Heart left ventricle (tissue), 16 donors: ENCODE measurements at regions of chr3 and their contacts with region 1.

Region 1: GRCh38 chr3:9452417-9452816 is 55.0 kb downstream of the SETD5 start:
- DNase-seq: no peak
- ATAC-seq: no peak
- H3K4me3 ChIP-seq: no peak overlapping the region
- H3K27ac ChIP-seq: peak overlapping the region in 1 of 12 donors; percentile 54
- H3K4me1 ChIP-seq: peaks cover 0 to 15% (median 0%) of the 10 kb centered on the region in 12 donors
- H3K27me3 ChIP-seq: no peaks in the 10 kb centered on the region
- CTCF ChIP-seq: no peak
- POLR2A ChIP-seq: no peak

Region 2: DNA sequence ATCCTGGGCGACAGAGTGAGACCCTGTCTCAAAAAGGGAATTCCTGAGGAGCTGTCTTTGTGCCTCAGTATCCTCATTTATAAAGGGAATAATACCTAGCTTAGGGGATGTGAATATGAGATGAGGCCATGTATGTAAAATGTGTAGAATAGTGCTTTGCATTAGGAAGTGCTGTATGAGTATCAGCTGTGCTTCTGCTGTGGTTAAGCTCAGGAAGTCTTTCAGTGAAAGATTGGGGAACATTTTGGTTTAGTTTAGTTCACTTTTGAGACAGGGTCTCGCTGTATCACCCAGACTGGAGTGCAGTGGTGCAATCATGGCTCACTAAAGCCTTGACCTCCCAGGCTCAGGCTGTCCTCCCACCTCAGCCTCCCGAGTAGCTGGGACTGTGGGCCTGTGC is 79.0 kb before region 1 on chr3:
- intact Hi-C with region 1: loop called in 2 of 10 experiments (anchors 5 kb)
- DNase-seq: no peak
- ATAC-seq: no peak
- H3K4me3 ChIP-seq: no peak overlapping the region
- H3K27ac ChIP-seq: no peak overlapping the region
- H3K4me1 ChIP-seq: peaks cover 0 to 5% (median 0%) of the 10 kb centered on the region in 12 donors
- H3K27me3 ChIP-seq: no peaks in the 10 kb centered on the region
- CTCF ChIP-seq: no peak
- POLR2A ChIP-seq: no peak

Region 3: GRCh38 chr3:9379327-9379726 is 73.1 kb before region 1 on chr3:
- intact Hi-C with region 1: loop called in 2 of 10 experiments (anchors 5 kb)
- DNase-seq: no peak
- ATAC-seq: peak in 3 of 4 donors; percentile 50 to 65 (median 59)
- H3K4me3 ChIP-seq: no peak overlapping the region
- H3K27ac ChIP-seq: peak overlapping the region in 4 of 12 donors; percentile 4 to 19 (median 16)
- H3K4me1 ChIP-seq: peaks cover 0 to 10% (median 0%) of the 10 kb centered on the region in 12 donors
- H3K27me3 ChIP-seq: no peaks in the 10 kb centered on the region
- CTCF ChIP-seq: no peak
- POLR2A ChIP-seq: no peak